GM12878 (cell line): ENCODE measurements at regions of chr10 and their contacts with region 1.

Region 1: DNA sequence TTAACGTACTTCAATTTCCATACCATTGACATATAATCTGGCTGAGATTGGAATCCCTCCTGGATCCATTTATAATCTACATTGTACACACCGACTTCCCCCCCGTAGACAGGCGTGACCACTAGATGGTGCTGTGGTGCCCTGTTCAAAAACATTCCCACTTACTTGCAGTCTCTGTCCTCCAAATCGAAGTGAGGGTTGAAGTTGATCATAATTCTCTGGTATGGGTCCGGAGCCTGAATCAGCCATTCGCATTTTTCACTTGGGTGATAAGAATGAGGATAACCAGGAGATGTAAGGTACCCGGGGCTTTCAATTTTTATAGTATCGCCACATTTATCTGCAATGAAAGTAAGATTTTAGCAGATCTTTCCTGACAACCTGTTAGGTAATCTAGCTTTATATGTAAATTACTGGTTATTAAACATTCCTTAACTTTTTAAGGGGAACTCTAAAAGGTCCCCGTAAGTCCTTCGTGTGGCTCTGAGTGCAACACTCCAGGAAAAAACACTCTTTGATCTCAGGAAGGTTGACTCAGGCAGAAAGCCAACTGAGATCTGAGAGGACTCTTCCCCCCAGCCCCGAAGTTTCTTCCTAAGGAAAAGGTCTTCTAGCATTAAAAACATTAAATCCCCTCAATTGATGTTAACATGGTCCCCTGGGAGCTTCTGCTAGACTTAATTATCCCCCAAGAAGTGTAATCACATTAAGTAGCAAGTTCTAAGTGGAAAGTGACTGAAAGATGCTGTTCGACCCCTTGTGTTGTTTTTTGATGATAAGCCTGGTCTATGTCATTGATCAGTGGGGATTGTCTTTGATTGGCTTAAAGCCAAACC is 3.7 kb downstream of the NRP1 start:
- DNase-seq: peak; percentile 13
- ATAC-seq: peak; percentile 70
- H3K4me3 ChIP-seq: no peak overlapping the region
- H3K27ac ChIP-seq: no peak overlapping the region
- H3K4me1 ChIP-seq: no peaks in the 10 kb centered on the region
- H3K27me3 ChIP-seq: peaks cover 3% of the 10 kb centered on the region in 2 experiments; a peak in 2 of 4 replicates
- CTCF ChIP-seq: peak; percentile 77 to 88 (median 87)
- EP300 ChIP-seq: no peak
- POLR2A ChIP-seq: no peak
- RAD21 ChIP-seq: peak; percentile 87

Region 2: DNA sequence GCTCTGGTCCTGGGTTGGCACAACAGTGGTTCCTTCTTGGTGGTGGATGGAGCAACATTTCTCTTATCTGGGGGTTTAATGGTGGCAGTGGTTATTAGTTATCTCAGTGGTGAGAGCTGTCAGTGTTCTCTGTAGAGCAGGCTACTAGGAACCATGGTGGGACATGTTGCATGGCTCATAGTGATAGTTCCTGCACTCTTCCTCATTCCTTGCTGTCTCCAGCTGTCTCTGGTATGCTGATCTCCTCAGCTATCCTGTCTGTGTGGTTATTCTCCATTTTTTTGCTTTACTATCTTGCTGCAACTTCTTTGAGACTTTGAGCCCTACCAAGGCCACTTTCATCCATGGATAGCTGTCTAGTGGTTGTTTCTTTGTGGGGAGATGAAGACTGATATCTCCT is 840.9 kb before region 1 on chr10:
- CTCF ChIA-PET with region 1: no interaction called
- POLR2A ChIA-PET with region 1: no interaction called
- RAD21 ChIA-PET with region 1: no interaction called
- SMC1A ChIA-PET with region 1: no interaction called
- in situ Hi-C with region 1: no loop called
- intact Hi-C with region 1: no loop called
- DNase-seq: no peak
- ATAC-seq: no peak
- H3K4me3 ChIP-seq: no peak overlapping the region
- H3K27ac ChIP-seq: no peak overlapping the region
- H3K4me1 ChIP-seq: no peaks in the 10 kb centered on the region
- H3K27me3 ChIP-seq: no peaks in the 10 kb centered on the region
- CTCF ChIP-seq: no peak
- EP300 ChIP-seq: no peak
- POLR2A ChIP-seq: no peak
- RAD21 ChIP-seq: no peak

Region 3: GRCh38 chr10:33341637-33342036 is 10.9 kb after region 1 on chr10:
- CTCF ChIA-PET with region 1: interaction called, 5 read pairs
- POLR2A ChIA-PET with region 1: interaction called, 3 read pairs
- RAD21 ChIA-PET with region 1: interaction called, 11 read pairs
- SMC1A ChIA-PET with region 1: interaction called, 9 read pairs
- in situ Hi-C with region 1: no loop called
- intact Hi-C with region 1: no loop called
- DNase-seq: no peak
- ATAC-seq: no peak
- H3K4me3 ChIP-seq: no peak overlapping the region
- H3K27ac ChIP-seq: no peak overlapping the region
- H3K4me1 ChIP-seq: no peaks in the 10 kb centered on the region
- H3K27me3 ChIP-seq: peaks cover 1 to 5% of the 10 kb centered on the region in 2 experiments; a peak in 2 of 4 replicates
- CTCF ChIP-seq: no peak
- EP300 ChIP-seq: no peak
- POLR2A ChIP-seq: no peak
- RAD21 ChIP-seq: no peak

Region 4: GRCh38 chr10:33559105-33559504 is 228.3 kb after region 1 on chr10:
- CTCF ChIA-PET with region 1: interaction called, 8 read pairs
- POLR2A ChIA-PET with region 1: no interaction called
- RAD21 ChIA-PET with region 1: interaction called, 12 read pairs
- SMC1A ChIA-PET with region 1: interaction called, 27 read pairs
- in situ Hi-C with region 1: no loop called
- intact Hi-C with region 1: no loop called
- DNase-seq: no peak
- ATAC-seq: peak; percentile 79
- H3K4me3 ChIP-seq: no peak overlapping the region
- H3K27ac ChIP-seq: no peak overlapping the region
- H3K4me1 ChIP-seq: no peaks in the 10 kb centered on the region
- H3K27me3 ChIP-seq: no peaks in the 10 kb centered on the region
- CTCF ChIP-seq: no peak
- EP300 ChIP-seq: no peak; a peak in 1 of 4 replicates
- POLR2A ChIP-seq: no peak
- RAD21 ChIP-seq: no peak

Region 5: GRCh38 chr10:33743429-33743857 is 412.7 kb after region 1 on chr10:
- CTCF ChIA-PET with region 1: interaction called, 4 read pairs
- POLR2A ChIA-PET with region 1: no interaction called
- RAD21 ChIA-PET with region 1: interaction called, 20 read pairs
- SMC1A ChIA-PET with region 1: interaction called, 28 read pairs
- in situ Hi-C with region 1: no loop called
- intact Hi-C with region 1: no loop called
- DNase-seq: peak; percentile 19
- ATAC-seq: peak; percentile 81
- H3K4me3 ChIP-seq: no peak overlapping the region
- H3K27ac ChIP-seq: no peak overlapping the region
- H3K4me1 ChIP-seq: no peaks in the 10 kb centered on the region
- H3K27me3 ChIP-seq: no peaks in the 10 kb centered on the region
- CTCF ChIP-seq: no peak
- EP300 ChIP-seq: no peak
- POLR2A ChIP-seq: no peak
- RAD21 ChIP-seq: no peak

Region 6: GRCh38 chr10:34213193-34213804 is 882.5 kb after region 1 on chr10:
- CTCF ChIA-PET with region 1: no interaction called
- POLR2A ChIA-PET with region 1: no interaction called
- RAD21 ChIA-PET with region 1: no interaction called
- SMC1A ChIA-PET with region 1: no interaction called
- in situ Hi-C with region 1: no loop called
- intact Hi-C with region 1: loop called (anchors 5 kb)
- DNase-seq: no peak
- ATAC-seq: peak; percentile 67
- H3K4me3 ChIP-seq: no peak overlapping the region
- H3K27ac ChIP-seq: no peak overlapping the region
- H3K4me1 ChIP-seq: no peaks in the 10 kb centered on the region
- H3K27me3 ChIP-seq: no peaks in the 10 kb centered on the region
- CTCF ChIP-seq: no peak
- EP300 ChIP-seq: no peak
- POLR2A ChIP-seq: no peak
- RAD21 ChIP-seq: no peak